ENCODE measurements at regions of chr15 and their contacts with region 1.

Region 1: DNA sequence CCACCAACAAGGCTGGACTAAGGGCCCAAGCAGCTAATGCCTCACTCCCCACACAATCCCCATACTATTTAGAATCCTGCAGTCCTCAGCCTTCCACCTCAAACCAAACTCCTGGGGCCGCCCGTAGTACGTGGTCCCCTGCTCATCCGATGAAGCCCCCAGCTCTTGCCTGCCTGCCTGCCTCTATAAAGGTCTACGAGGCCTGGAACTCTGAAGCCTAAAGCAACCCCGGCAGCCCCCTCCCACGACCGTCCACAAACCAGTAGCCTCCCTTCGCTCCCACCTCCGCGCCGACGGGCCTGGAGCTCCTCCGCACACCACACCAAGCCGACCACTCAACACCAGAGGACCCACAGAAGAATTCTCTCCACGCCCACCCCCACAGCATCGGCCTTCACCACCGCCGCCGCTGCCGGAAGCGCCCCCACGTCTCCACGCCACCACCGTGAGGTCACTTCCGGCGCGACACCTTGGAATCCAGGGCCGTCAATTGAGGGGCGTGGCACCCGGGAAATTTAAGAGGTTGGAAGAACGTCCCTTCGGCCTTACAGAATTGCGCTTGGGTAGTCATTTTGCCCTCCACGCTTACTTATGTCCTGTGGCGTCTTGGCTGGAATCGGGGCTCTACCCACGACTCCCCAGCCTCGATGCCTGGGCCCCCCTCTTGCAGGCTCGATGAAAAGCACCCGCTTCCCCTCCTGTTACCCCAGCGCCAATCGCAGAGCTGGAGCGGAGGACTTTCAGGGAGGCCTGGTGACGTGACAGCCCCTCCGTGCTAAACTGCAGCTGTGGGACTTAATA is at the start of gene EDC3:
- DNase-seq: peak; percentile 78
- H3K4me3 Mint-ChIP-seq: peak within 1 kb of the TSS; percentile 99
- H3K27ac Mint-ChIP-seq: peak within 1 kb of the TSS; percentile 99
- H3K4me1 Mint-ChIP-seq: peaks cover 22% of the 10 kb centered on the region
- H3K27me3 Mint-ChIP-seq: no peaks in the 10 kb centered on the region
- total RNA-seq, gene EDC3: 49.3 and 54.8 TPM in 2 replicates

Region 2: DNA sequence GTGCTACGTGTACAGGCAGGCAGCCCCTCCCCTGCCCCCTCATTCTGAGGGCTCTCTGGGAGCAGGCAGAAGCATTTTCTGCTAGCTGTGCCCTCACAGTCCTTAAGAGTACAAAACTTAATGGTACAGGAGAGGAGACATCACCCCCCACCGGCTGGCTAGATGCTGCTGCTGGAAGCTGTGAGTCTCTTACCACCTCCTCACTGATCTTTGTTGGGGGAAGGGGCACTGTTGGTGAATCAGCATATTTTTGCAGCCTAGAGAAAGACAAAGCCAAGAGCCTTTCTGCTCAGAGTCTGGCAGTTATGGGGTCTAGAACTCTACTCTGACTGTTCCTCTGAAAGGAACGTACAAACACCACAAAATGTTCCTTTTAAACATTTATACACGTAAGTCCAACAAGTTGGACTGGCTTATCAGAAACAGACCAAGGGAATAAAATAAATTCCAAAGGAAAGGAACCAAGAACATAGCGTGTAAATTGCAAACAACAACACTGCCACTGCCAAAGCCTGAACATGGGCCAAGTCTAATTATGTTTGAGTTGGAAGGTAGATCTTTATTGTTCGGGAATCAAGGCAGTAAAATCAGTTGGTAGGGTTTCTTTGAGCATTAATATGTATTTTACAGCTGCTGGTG is 52.9 kb before region 1 on chr15:
- intact Hi-C with region 1: no loop called
- DNase-seq: no peak
- H3K4me3 Mint-ChIP-seq: no peak overlapping the region
- H3K27ac Mint-ChIP-seq: no peak overlapping the region
- H3K4me1 Mint-ChIP-seq: peaks cover 10% of the 10 kb centered on the region
- H3K27me3 Mint-ChIP-seq: no peaks in the 10 kb centered on the region

Region 3: DNA sequence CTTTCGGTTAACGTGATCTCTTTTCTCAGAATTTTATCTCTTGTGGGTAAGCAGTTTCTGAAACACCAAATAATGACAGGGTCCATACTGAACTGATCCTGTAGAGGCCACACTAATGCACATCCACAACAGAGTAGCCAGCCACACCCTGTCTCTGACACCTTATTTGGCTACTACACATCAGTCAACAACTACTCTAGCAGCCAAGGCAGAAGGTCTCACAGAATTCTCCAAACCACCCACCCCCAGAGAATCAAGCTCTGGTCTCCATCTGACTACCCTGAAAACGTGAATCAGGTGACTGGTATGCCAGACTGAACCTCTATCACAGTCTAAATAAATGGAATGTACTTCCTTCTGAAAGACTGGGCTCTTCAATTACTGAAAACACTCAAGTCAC is 38.0 kb before region 1 on chr15:
- intact Hi-C with region 1: loop called (anchors 5 kb)
- DNase-seq: no peak
- H3K4me3 Mint-ChIP-seq: no peak overlapping the region
- H3K27ac Mint-ChIP-seq: peak overlapping the region; percentile 47
- H3K4me1 Mint-ChIP-seq: peaks cover 35% of the 10 kb centered on the region
- H3K27me3 Mint-ChIP-seq: no peaks in the 10 kb centered on the region

Region 4: GRCh38 chr15:74709011-74709410 is 13.2 kb after region 1 on chr15:
- intact Hi-C with region 1: no loop called
- DNase-seq: no peak
- H3K4me3 Mint-ChIP-seq: no peak overlapping the region
- H3K27ac Mint-ChIP-seq: no peak overlapping the region
- H3K4me1 Mint-ChIP-seq: peaks cover 5% of the 10 kb centered on the region
- H3K27me3 Mint-ChIP-seq: peaks cover 16% of the 10 kb centered on the region

Region 5: DNA sequence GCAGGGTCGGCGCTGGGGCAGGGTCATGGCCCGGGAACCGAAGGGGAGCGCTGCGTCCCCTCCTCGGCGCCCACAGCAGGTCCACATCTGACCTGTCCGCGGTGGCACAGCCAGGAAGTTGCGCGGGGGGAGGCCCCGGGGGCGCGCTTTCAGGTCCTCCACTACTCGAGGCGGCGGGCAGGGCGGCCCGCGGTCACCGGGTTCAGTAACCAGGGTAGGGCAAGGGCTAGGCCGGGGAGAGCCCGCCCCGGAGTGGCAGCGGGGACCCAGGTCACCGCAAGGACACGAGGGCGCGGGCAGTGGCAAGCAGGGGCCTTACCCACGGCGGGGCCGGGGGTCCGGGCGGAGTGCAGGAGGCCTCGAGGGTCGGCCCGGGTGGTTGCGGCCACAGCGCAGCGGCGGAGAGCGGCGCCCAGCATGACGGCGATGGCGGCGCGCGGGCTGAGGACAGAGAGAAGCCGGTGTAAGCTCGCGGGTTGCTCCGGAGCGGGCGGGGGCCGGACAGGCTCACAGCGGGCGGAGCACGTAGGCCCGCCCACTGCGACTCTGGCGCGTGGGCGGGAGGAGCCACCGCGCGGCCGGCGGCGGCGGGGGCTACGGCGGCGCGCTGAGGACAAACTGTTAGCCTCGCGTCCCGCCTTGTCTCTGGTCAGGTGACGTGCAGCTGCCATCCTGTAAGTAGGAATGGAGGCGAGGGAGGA is 241.9 kb after region 1 on chr15 and contains the start of gene COX5A:
- intact Hi-C with region 1: loop called (anchors 10 kb)
- DNase-seq: peak; percentile 92
- H3K4me3 Mint-ChIP-seq: peak within 1 kb of the TSS; percentile 85
- H3K27ac Mint-ChIP-seq: peak within 1 kb of the TSS; percentile 90
- H3K4me1 Mint-ChIP-seq: peaks cover 20% of the 10 kb centered on the region
- H3K27me3 Mint-ChIP-seq: no peaks in the 10 kb centered on the region
- total RNA-seq, gene COX5A: 311 and 333 TPM in 2 replicates

Measured in activated T-helper 2 cell treated with anti-CD3 and anti-CD28 coated beads, Interferon-gamma antibody, Interleukin-2, Interleukin-4, amounts not matched to agents 10 μg/mL and 5 μg/mL and 100 μg/mL, durations not matched to agents 14 hours and 24 hours and 36 hours (primary cell).